PC-3 (cell line): ENCODE measurements at regions of chr5 and their contacts with region 1.

Region 1: DNA sequence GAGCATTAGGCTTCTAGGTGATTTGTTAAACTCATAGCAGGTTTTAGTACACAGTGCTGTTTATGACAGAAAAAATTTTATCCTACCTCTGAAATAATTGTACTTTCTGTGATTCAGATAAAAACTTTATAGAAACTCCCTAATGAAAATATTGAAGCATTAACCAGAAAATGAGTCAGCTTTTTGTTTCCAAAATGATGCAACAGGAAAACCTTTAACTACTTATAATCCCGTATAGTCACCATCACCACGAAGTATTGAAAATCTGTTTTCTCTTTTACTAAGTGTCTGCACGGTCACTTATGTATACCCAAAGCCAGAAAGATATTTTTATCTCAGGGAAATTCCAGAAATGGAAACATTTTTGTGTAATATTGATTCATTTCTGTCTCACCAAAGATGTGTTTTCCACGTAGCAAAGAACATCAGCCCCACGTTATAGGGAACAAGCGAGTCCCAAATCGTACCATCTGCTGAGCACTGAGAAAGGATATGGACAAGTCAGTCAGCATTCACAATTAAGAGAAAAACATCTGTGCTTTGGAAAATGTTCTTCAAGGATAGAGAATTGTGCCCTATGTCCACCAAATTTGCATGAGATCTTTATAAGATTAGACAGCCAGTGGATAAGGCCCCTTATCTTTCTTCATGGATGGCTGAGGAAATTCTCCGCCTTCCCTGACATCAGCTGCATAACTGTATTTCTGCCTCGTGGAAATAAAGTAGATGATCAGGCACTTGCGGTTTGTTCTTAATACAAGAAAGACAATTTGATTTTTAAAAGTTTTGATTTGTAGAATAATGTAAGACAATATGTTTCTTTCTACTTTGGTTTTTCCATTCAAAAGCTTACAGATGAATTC is 41.9 kb downstream of the TNFAIP8 start:
- DNase-seq: peak; percentile 70
- ATAC-seq: peak; percentile 58
- H3K4me3 ChIP-seq: peak overlapping the region; percentile 53
- H3K27ac ChIP-seq: peak overlapping the region; percentile 84
- H3K4me1 ChIP-seq: peaks cover 35% of the 10 kb centered on the region
- H3K27me3 ChIP-seq: no peaks in the 10 kb centered on the region
- CTCF ChIP-seq: no peak

Region 2: DNA sequence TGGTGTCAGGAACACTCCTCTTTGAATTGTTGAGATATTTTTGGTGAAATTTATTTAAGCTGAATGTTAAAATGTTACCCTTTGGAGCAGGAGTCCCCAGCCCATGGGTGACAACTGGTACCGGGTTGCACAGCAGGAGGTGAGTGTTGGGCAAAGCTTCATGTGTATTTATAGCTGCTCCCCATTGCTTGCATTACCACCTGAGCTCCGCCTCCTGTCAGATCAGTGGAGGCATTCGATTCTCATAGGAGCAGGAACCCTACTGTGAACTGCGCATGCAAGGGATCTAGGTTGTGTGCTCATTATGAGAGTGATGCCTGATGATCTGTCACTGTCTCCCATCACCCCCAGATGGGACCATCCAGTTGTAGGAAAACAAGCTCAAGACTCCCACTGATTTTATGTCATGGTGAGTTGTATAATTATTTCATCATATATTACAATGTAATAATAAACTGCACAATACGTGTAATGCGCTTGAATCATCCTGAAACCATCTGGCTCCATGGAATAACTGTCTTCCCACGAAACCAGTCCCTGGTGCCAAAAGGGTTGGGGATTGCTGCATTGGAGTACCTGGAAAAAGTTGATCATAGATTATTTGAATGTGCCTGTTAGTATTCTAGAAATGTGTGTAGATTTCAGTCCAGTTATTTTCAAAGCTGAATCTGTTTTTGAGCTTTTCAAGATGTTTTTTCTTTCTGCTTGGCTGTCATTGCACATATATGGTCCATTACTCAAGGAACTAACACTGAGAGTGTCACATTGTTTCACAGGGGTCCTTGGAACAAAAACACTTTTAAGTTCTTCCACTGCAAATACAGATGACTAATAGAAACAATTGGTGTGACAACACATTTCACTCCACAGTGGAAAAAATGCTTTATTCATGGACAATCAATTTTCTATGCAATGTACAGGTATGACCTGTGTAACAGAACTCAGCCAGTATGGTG is 146.5 kb before region 1 on chr5:
- CTCF ChIA-PET with region 1: no interaction called
- POLR2A ChIA-PET with region 1: no interaction called
- intact Hi-C with region 1: no loop called
- DNase-seq: no peak
- ATAC-seq: no peak
- H3K4me3 ChIP-seq: no peak overlapping the region
- H3K27ac ChIP-seq: no peak overlapping the region
- H3K4me1 ChIP-seq: no peaks in the 10 kb centered on the region
- H3K27me3 ChIP-seq: no peaks in the 10 kb centered on the region
- CTCF ChIP-seq: no peak

Region 3: DNA sequence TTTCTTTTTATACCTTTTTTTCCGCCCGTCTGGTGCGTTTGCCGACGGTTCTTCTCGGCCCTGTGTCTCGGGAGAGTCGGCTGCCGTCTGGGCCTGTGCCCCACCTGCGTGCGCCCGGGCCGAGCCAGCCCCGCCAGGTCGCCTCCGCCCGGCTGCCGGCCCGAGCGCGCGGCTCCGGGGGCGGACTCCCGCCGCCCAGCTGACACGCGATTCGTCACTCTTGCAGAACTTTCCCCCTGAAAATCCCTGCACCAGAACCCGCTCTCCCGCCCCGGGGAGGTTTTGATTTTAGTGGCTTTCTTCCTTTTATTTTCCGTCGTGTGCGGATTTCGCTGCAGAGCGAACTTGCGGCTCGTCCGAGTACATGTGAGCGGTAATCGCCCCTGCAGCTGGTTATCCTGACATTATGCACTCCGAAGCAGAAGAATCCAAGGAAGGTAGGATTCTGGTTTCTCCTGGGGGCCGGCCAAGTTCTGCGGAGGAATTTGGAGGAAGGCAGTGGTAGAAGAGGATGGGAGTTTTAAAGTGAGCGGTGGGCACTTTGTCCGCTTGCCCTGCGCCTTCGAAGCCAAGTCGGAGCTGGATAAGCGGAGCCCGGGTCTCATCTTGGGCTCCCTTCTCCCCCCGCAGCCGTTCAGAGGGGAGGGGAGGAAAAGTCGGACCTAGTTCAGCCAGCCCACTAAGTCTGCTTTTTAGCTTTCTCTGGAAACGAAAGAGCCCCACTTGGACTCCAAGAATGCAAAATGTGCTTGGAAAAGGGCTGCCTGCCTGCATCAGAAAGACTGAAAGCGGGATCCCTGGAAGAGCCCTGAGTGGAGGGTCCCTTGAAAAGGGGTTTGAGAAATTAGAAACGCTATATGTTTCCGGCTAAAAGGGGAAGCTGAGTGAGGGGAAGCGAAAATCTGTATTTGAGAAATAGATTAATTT is 41.8 kb before region 1 on chr5 and contains the start of gene TNFAIP8:
- CTCF ChIA-PET with region 1: no interaction called
- POLR2A ChIA-PET with region 1: no interaction called
- intact Hi-C with region 1: loop called (anchors 5 kb)
- DNase-seq: peak; percentile 69
- ATAC-seq: peak; percentile 79
- H3K4me3 ChIP-seq: peak within 1 kb of the TSS; percentile 94
- H3K27ac ChIP-seq: peak within 1 kb of the TSS; percentile 94
- H3K4me1 ChIP-seq: peaks cover 56% of the 10 kb centered on the region
- H3K27me3 ChIP-seq: no peaks in the 10 kb centered on the region
- CTCF ChIP-seq: no peak
- total RNA-seq, gene TNFAIP8: 11.8 and 20.0 TPM in 2 replicates